Dorsolateral prefrontal cortex (tissue), 120 donors: ENCODE measurements at regions of chr20 and their contacts with region 1.

Region 1: GRCh38 chr20:19995220-19995863 is 21.8 kb upstream of the NAA20 start:
- DNase-seq: peak in 3 of 10 donors; percentile 29 to 68 (median 55)
- H3K4me3 ChIP-seq: peak overlapping the region in 1 of 59 donors; percentile 2
- H3K27ac ChIP-seq: peak overlapping the region in 55 of 59 donors; percentile 7 to 89 (median 79)
- H3K27me3 ChIP-seq: no peaks in the 10 kb centered on the region
- CTCF ChIP-seq: peak; percentile 62 to 93 (median 86)

Region 2: DNA sequence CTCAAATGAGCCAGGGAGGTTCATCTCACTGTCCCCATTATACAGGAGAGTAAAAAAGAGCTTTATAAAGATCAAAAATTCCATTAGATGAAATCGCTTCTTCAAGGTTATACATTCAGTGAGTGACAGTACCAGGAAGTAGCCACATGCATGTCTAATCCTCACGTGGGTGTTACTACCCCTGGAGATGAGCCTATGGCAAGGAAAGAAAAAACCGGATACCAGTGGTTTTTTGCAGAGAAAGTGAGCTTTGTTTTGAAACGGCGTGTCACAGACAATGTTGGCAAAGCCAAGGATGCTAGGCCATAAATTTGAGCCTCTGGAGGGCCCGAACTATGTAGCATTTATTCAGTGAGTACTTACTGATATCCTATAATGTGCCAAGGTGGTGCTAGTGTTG is 452.2 kb before region 1 on chr20:
- intact Hi-C with region 1: no loop called
- DNase-seq: no peak
- H3K4me3 ChIP-seq: no peak overlapping the region
- H3K27ac ChIP-seq: no peak overlapping the region
- H3K27me3 ChIP-seq: no peaks in the 10 kb centered on the region
- CTCF ChIP-seq: no peak

Region 3: GRCh38 chr20:19784511-19785172 is 210.7 kb before region 1 on chr20:
- intact Hi-C with region 1: loop called (anchors 1 to 5 kb)
- DNase-seq: peak in 5 of 10 donors; percentile 22 to 70 (median 60)
- H3K4me3 ChIP-seq: peak overlapping the region in 19 of 59 donors; percentile 5 to 33 (median 18)
- H3K27ac ChIP-seq: peak overlapping the region in 53 of 59 donors; percentile 1 to 82 (median 69)
- H3K27me3 ChIP-seq: no peaks in the 10 kb centered on the region
- CTCF ChIP-seq: peak; percentile 63 to 94 (median 84)

Region 4: DNA sequence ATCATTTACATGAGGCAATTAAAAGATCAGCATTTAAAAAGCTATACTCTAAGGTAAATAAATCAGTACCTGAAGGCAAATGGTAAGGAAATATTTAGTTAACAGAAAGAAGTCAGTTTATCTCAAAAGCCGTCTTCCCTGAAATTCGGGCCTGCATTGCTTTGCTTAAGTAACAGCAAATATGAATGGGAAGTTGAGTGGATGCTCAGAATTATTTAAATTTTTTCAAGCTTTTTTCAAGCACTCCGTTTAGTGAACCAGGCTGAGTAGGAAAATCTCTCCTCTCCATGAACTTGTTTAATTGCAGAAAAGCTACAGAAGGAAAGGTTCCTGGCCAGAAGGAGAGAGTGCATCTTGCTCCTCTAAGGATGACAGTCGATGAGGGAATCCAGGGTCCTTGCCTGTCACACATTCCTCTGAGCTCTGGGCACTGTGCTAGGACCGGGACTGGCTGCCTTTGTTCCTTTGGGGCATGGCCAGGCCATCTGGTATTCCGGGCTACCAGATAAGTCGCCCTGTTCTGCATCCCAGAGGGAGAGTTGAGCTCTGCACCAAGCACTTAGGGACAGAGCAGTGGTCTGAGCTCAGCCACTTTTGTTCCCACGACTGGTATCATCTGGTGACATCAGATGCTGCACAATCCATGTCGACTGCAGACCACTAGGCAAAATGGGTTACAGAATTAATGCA is 159.7 kb before region 1 on chr20:
- intact Hi-C with region 1: loop called in 1 of 2 experiments (anchors 5 kb)
- DNase-seq: peak; percentile 59 to 91 (median 83)
- H3K4me3 ChIP-seq: peak overlapping the region in 21 of 59 donors; percentile 0 to 32 (median 15)
- H3K27ac ChIP-seq: peak overlapping the region; percentile 0 to 94 (median 83)
- H3K27me3 ChIP-seq: no peaks in the 10 kb centered on the region
- CTCF ChIP-seq: peak in 25 of 56 donors; percentile 7 to 45 (median 25)

Region 5: DNA sequence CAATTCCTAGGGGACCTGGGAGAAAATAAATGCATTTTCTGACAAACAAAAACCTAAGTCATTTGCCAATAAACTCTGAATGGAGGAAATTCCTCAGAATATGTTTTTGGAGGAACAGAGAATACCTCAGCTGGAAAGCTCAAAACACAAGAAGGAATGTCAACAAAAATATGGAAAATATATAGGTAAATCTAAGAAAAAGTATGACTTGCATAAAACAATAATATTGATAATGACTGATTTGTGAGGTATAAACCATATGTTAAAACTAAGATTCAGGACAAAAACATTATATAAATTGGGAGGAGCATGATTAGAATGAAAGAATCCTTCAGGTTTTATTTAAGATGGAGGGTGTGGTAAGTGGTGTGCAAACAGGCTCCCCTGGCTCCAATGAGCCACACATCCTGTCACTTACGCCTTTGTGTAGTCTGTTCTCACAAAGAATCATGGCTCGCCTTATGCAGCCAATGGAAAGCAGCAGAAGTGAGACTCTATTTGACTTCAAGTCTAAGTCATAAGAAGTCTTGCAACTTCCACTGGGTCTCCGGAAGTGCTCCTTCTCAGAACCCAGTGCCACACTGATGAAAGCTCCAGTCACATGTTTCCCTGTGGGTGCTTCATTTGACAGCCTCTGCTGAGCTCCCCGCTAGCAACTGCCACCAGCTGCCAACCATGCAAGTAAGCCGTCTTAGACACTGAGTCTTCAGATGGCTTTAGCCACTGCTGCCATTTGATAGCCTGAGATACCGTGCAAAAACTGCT is 65.1 kb after region 1 on chr20:
- intact Hi-C with region 1: no loop called
- DNase-seq: no peak
- H3K4me3 ChIP-seq: no peak overlapping the region
- H3K27ac ChIP-seq: no peak overlapping the region
- H3K27me3 ChIP-seq: no peaks in the 10 kb centered on the region
- CTCF ChIP-seq: no peak

Region 6: GRCh38 chr20:20138301-20139064 is 143.1 kb after region 1 on chr20:
- intact Hi-C with region 1: no loop called
- DNase-seq: no peak
- H3K4me3 ChIP-seq: no peak overlapping the region
- H3K27ac ChIP-seq: no peak overlapping the region
- H3K27me3 ChIP-seq: no peaks in the 10 kb centered on the region
- CTCF ChIP-seq: no peak

Region 7: GRCh38 chr20:20188647-20189046 is 193.3 kb after region 1 on chr20:
- intact Hi-C with region 1: no loop called
- DNase-seq: no peak
- H3K4me3 ChIP-seq: no peak overlapping the region
- H3K27ac ChIP-seq: no peak overlapping the region
- H3K27me3 ChIP-seq: no peaks in the 10 kb centered on the region
- CTCF ChIP-seq: no peak